CD4-positive, alpha-beta T cell (primary cell): ENCODE measurements at regions of chr6 and their contacts with region 1.

Region 1: GRCh38 chr6:53171605-53172446 is 23.2 kb upstream of the GCM1 start:
- DNase-seq: peak; percentile 82 to 95 (median 92)
- ATAC-seq: peak; percentile 100
- H3K4me3 ChIP-seq: no peak overlapping the region
- H3K4me3 Mint-ChIP-seq: no peak overlapping the region
- H3K27ac ChIP-seq: no peak overlapping the region
- H3K27ac Mint-ChIP-seq: no peak overlapping the region
- H3K4me1 ChIP-seq: no peaks in the 10 kb centered on the region
- H3K4me1 Mint-ChIP-seq: no peaks in the 10 kb centered on the region
- H3K27me3 ChIP-seq: no peaks in the 10 kb centered on the region
- H3K27me3 Mint-ChIP-seq: no peaks in the 10 kb centered on the region
- CTCF ChIP-seq: peak; percentile 100

Region 2: DNA sequence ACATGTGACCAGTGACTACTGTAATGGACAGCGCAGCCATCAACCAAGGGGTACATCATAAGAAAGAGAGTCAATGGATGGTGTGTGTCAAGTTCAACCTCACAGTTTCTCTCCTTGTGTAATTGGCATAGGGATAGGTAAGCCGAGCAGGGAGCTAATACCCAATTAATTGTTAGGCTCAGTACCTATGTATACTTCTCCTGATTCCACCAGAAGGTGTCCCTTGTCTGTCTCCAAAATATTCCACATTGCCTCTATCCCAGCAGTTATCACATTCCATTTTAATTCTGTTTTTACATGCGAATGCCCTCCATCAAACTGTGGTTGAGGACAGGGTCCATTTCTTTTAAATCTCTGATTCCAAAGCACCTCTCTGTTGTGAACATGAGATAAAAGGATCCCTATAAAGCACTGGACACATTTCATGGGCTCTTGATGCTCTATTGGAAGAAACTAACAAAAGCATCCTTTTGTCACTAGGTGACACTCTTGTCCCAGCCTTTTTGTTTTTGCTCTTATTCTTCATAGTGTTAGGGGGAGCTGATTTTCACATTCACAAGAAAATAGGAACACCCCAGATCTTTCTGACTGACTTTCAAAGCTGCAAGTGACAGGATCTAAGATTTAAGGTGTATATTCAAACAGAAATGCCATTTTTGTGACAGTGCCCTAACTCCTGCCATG is 67.7 kb before region 1 on chr6:
- CTCF ChIA-PET with region 1: no interaction called
- POLR2A ChIA-PET with region 1: no interaction called
- intact Hi-C with region 1: no loop called
- DNase-seq: peak in 3 of 14 experiments; percentile 7 to 18 (median 9)
- ATAC-seq: no peak
- H3K4me3 ChIP-seq: no peak overlapping the region
- H3K4me3 Mint-ChIP-seq: no peak overlapping the region
- H3K27ac ChIP-seq: no peak overlapping the region
- H3K27ac Mint-ChIP-seq: no peak overlapping the region
- H3K4me1 ChIP-seq: no peaks in the 10 kb centered on the region
- H3K4me1 Mint-ChIP-seq: no peaks in the 10 kb centered on the region
- H3K27me3 ChIP-seq: no peaks in the 10 kb centered on the region
- H3K27me3 Mint-ChIP-seq: no peaks in the 10 kb centered on the region
- CTCF ChIP-seq: no peak

Region 3: GRCh38 chr6:53151676-53152075 is 20.1 kb before region 1 on chr6:
- CTCF ChIA-PET with region 1: no interaction called
- POLR2A ChIA-PET with region 1: no interaction called
- intact Hi-C with region 1: no loop called
- DNase-seq: peak in 1 of 14 experiments; percentile 15
- ATAC-seq: no peak
- H3K4me3 ChIP-seq: no peak overlapping the region
- H3K4me3 Mint-ChIP-seq: no peak overlapping the region
- H3K27ac ChIP-seq: no peak overlapping the region
- H3K27ac Mint-ChIP-seq: no peak overlapping the region
- H3K4me1 ChIP-seq: no peaks in the 10 kb centered on the region
- H3K4me1 Mint-ChIP-seq: no peaks in the 10 kb centered on the region
- H3K27me3 ChIP-seq: no peaks in the 10 kb centered on the region
- H3K27me3 Mint-ChIP-seq: peaks cover 15% of the 10 kb centered on the region
- CTCF ChIP-seq: no peak

Region 4: DNA sequence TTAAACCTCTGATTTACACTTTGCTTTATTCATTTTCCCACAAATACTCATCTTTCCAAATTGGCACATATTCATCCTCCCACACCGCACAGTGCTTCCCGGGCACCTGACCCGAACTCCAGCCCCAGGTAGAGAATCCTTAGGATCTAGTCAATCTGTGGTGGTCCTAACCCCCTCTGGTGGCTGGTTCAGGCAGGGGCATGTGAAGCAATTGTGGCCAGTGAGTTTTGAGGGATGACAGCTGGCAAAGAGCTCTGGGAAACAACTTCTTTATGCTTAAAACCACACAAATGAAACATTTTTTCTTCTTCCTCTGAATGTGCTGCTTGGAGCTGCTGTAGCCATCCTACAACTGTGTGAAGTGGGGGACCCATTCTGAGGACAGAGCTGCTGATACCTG is 122.3 kb after region 1 on chr6:
- CTCF ChIA-PET with region 1: no interaction called
- POLR2A ChIA-PET with region 1: interaction called, 3 read pairs
- intact Hi-C with region 1: loop called (anchors 5 kb)
- DNase-seq: peak in 3 of 14 experiments; percentile 22 to 46 (median 40)
- ATAC-seq: no peak
- H3K4me3 ChIP-seq: no peak overlapping the region
- H3K4me3 Mint-ChIP-seq: no peak overlapping the region
- H3K27ac ChIP-seq: peak overlapping the region in 1 of 2 donors; percentile 23
- H3K27ac Mint-ChIP-seq: peak overlapping the region; percentile 73
- H3K4me1 ChIP-seq: peaks cover 53% of the 10 kb centered on the region
- H3K4me1 Mint-ChIP-seq: peaks cover 89% of the 10 kb centered on the region
- H3K27me3 ChIP-seq: no peaks in the 10 kb centered on the region
- H3K27me3 Mint-ChIP-seq: no peaks in the 10 kb centered on the region
- CTCF ChIP-seq: peak; percentile 33

Region 5: DNA sequence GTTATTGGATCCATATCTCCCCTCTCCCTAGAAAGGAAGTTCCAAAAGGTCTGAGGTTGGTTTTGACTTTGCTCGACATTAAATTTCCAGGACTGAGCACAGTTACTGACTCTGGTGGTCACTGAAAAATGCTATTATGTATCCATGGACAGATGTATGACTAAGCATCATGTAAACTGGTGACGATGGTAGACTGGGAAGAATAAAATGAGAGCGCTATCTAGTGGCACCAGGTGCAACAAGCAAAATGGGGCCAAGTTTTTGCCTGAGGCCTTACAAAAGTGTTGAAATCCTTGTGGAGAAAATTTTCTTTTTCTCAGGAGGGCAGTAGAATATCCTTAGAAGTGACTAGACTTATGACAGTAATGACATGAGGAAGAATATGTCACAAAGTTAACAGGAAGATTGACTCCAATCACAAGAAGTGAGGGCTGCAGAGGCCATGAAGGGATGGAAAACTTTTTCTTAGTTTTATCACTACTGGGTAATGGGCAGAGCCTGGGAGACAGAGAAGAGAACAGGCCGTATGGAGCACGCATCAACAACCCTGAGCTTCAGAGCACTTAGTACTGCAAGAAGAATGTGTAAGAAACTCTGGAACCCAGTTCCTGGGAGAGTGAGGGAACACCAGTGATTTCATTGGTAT is 265.9 kb after region 1 on chr6:
- CTCF ChIA-PET with region 1: no interaction called
- POLR2A ChIA-PET with region 1: no interaction called
- intact Hi-C with region 1: loop called (anchors 1 to 2 kb)
- DNase-seq: peak in 5 of 14 experiments; percentile 7 to 64 (median 44)
- ATAC-seq: peak; percentile 54
- H3K4me3 ChIP-seq: no peak overlapping the region
- H3K4me3 Mint-ChIP-seq: no peak overlapping the region
- H3K27ac ChIP-seq: no peak overlapping the region
- H3K27ac Mint-ChIP-seq: no peak overlapping the region
- H3K4me1 ChIP-seq: no peaks in the 10 kb centered on the region
- H3K4me1 Mint-ChIP-seq: no peaks in the 10 kb centered on the region
- H3K27me3 ChIP-seq: no peaks in the 10 kb centered on the region
- H3K27me3 Mint-ChIP-seq: peaks cover 3% of the 10 kb centered on the region
- CTCF ChIP-seq: peak; percentile 60

Region 6: DNA sequence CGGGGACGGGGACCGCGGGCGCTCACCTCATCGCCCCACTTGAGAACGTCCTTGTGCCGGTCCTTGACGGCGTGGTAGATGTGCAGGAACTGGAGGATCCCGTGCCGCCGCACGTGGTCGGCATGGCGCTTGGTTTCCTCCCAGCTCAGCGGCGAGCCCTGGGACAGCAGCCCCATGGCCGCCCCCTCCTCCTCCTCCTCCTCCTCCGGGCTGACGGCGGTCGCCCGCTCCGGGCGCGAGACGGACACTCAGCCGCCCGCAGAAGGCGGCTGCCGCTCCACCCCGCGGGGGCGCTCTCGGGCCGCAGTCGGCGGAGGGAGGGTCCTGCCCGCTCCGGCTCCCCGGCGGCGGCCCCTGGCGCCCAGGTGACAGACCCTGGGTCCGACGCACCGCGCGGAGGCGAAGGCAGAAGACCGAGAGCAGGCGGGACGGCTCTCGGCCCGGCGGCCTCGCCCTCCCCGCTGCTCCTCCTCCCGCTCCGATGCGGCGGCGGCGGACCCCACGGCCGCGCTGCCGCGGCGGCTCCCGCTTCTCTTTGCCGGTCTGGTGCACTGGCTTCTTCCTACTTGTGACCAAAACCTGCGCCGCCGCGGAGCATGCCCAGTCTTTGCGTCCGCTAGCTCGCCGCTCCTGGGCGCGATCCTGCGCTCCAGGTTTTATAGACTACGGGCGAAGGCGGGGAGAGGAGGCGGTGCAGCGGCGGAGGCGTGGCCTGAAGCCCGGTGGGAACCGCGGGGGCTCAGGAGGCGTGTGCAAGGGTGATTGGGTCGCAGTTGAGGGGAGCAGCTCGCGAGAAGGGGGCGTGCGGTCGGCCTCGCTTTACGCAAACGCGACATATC is 372.9 kb after region 1 on chr6 and contains the start of gene GCLC:
- CTCF ChIA-PET with region 1: no interaction called
- POLR2A ChIA-PET with region 1: no interaction called
- intact Hi-C with region 1: loop called in 1 of 2 experiments (anchors 5 kb)
- DNase-seq: peak; percentile 71 to 95 (median 83)
- ATAC-seq: peak; percentile 60
- H3K4me3 ChIP-seq: peak within 1 kb of the TSS; percentile 54
- H3K4me3 Mint-ChIP-seq: peak within 1 kb of the TSS; percentile 99
- H3K27ac ChIP-seq: peak within 1 kb of the TSS in 1 of 2 donors; percentile 31
- H3K27ac Mint-ChIP-seq: peak within 1 kb of the TSS; percentile 69
- H3K4me1 ChIP-seq: peaks cover 43% of the 10 kb centered on the region
- H3K4me1 Mint-ChIP-seq: peaks cover 74% of the 10 kb centered on the region
- H3K27me3 ChIP-seq: no peaks in the 10 kb centered on the region
- H3K27me3 Mint-ChIP-seq: no peaks in the 10 kb centered on the region
- CTCF ChIP-seq: peak; percentile 67
- total RNA-seq, gene GCLC: 8.9 to 10.1 TPM

Region 7: GRCh38 chr6:53658992-53659391 is 487.2 kb after region 1 on chr6:
- CTCF ChIA-PET with region 1: no interaction called
- POLR2A ChIA-PET with region 1: no interaction called
- intact Hi-C with region 1: loop called (anchors 5 to 10 kb)
- DNase-seq: no peak
- ATAC-seq: no peak
- H3K4me3 ChIP-seq: no peak overlapping the region
- H3K4me3 Mint-ChIP-seq: no peak overlapping the region
- H3K27ac ChIP-seq: no peak overlapping the region
- H3K27ac Mint-ChIP-seq: no peak overlapping the region
- H3K4me1 ChIP-seq: no peaks in the 10 kb centered on the region
- H3K4me1 Mint-ChIP-seq: no peaks in the 10 kb centered on the region
- H3K27me3 ChIP-seq: no peaks in the 10 kb centered on the region
- H3K27me3 Mint-ChIP-seq: peaks cover 10% of the 10 kb centered on the region
- CTCF ChIP-seq: no peak